Left cardiac atrium (tissue), 4 donors: ENCODE measurements at regions of chr3 and their contacts with region 1.

Region 1: DNA sequence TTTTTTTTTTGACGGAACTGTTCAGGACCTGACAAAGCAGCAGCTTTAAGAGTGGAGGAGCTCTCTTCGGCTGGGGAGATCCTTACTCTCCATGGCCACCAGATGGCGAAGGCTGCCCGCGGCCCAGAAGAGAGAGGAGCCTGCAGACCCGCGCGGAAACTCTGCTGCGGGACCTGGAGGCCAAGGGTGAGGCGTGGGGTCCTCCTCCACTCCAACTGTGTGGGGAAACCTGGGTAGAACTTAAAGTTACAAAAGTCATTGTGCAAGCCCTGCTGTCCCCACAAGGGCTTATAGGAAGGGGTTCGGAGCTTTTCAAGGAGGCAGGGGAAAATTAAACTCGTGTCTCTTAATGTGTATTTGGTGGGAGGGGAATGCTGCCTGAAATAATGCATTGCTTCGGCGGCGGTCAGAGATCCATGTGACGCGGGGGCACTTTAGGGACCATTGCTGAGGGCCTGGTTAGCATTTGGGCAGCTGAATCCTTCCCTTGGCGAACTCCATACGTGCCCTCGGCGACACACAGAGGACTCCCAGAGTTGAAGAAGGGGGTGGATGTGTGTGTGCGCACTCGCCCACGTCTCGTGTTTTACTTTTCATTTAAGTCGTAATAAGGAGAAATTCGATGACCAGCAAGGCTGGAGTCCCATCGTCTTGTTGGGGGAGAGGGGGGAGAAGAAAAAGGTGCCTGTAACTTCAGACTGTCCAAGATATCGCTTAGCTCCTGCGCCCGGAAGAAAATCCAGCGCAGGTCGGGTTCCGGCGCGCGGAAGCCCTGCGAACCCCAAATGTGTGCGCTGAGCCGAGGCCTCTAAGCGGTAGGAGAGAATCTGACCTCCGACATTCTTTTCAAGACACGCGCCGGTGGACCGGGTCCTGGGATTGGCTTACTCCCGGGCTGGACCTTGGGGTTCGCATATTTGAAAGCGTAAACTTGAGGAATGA is 9.7 kb downstream of the EOMES start:
- DNase-seq: peak; percentile 85
- ATAC-seq: peak; percentile 96 to 97

Region 2: GRCh38 chr3:27105904-27106303 is 606.5 kb before region 1 on chr3:
- intact Hi-C with region 1: no loop called
- DNase-seq: no peak
- ATAC-seq: no peak

Region 3: DNA sequence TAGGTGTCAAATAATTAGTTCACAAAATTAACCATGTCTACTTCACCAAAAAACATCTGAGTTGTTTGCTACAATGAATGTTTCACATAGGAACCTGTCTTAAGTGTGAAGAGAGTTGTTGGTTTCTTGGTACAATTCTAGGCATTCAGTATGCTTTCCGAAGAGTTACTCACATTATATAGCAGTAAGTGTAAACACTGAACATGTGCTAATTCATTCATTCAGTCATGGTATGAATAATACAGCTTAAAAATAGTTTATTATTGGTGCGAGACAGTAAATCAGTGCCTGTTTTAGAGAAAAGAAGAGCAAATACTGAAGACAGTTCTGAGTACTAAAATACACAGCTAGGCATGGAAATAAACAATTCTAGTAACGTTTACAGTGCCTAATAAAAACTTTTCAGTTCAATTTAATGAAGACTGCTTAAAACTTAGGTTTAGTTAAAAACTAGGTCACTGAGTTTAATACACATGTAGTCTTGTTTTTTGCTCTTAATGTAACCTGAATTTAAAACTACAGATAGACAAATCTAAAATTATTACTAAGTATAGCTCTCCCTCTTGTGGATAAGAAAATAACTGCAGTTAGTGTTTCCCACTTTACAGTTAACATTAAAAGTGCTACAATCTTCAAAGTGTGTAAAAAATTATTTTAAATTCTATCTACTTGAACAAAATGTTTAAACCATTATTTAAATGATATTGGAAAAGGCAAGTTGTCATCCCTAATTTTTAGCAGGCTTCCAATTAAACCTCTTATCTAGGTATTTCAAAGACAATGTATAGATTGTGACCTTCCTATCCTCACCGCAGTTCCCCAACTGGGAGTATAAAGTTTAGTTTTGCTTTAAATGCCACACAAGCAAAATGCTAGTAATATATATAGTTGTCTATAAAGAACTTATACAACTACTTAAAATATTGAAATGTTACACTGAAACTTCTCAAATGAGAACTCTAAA is 616.1 kb after region 1 on chr3:
- intact Hi-C with region 1: loop called (anchors 2 to 5 kb)
- DNase-seq: no peak
- ATAC-seq: peak in 1 of 2 donors; percentile 37